Heart left ventricle (tissue), 16 donors: ENCODE measurements at regions of chr17 and their contacts with region 1.

Region 1: DNA sequence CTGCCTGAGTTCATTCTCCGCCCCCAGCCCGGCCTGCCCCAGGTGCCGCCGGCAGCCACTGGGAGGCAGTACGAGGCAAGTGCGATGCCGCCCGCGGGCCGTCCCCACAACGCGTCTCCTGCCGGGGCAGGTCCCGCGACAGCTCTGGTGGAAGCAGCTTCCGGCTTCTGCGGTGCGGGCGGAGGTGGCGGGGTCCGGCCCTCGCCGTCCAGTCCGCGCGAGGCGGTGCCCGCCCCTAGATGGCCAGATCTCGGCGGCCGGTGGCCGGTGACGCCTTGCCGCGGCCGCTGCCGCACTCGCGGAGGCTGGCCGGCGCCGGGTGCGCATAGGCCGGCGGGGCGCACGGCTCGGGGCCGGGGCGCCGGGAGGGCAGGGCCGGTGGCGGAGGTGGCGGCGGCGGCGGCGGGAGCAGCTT is 1.8 kb downstream of the GJD3 start:
- DNase-seq: peak; percentile 56 to 85 (median 73)
- ATAC-seq: peak in 3 of 4 donors; percentile 27 to 64 (median 43)
- H3K4me3 ChIP-seq: peak overlapping the region in 11 of 12 donors; percentile 43 to 69 (median 58)
- H3K27ac ChIP-seq: peak overlapping the region in 6 of 12 donors; percentile 17 to 60 (median 42)
- H3K4me1 ChIP-seq: peaks cover 0 to 33% (median 12%) of the 10 kb centered on the region in 12 donors
- H3K27me3 ChIP-seq: peaks cover 0 to 16% (median 0%) of the 10 kb centered on the region in 9 donors
- CTCF ChIP-seq: peak; percentile 25 to 70 (median 49)
- POLR2A ChIP-seq: no peak

Region 2: DNA sequence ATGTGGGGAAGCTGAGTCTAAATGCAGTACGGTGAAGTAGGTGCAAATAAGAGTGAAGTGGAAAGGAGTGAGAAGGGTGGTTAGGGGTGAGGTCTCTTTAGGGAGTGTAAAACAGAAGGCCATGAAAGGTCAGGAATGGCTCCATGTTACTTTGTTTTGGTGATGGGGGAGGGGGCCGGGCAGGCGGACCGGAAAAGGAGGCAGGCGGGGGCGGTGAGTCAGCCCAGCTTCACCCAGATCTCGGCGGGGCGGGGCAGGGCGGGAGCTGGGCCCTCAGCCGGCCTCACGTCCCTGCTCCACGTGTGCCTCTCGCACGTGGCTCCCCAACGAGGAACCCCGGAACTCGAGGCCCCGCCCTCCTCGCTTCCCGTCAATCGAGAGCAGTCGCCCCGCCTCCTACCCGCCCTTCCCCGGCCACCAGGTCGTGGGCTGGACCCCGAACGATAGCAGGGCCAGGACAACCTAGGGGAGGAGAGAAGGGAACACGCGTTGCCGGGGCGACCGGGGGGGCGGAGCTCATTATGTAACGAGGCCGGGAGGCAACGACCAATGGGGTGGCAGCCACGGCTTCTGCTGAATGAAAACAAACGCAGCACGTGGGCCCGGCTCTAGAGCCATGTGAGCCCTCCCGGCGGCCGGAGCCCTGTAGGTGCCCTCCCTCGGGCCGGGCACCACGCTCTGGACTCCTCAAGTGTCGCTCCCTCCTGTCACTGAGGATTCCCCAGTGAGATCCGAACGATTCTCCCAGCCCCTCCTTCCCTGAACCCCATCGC is 263.7 kb before region 1 on chr17:
- intact Hi-C with region 1: no loop called
- DNase-seq: peak; percentile 100
- ATAC-seq: peak; percentile 75 to 87 (median 82)
- H3K4me3 ChIP-seq: peak overlapping the region; percentile 72 to 100 (median 84)
- H3K27ac ChIP-seq: peak overlapping the region; percentile 93 to 100 (median 98)
- H3K4me1 ChIP-seq: peaks cover 20 to 93% (median 79%) of the 10 kb centered on the region in 12 donors
- H3K27me3 ChIP-seq: no peaks in the 10 kb centered on the region
- CTCF ChIP-seq: no peak
- POLR2A ChIP-seq: peak; percentile 64 to 89

Region 3: DNA sequence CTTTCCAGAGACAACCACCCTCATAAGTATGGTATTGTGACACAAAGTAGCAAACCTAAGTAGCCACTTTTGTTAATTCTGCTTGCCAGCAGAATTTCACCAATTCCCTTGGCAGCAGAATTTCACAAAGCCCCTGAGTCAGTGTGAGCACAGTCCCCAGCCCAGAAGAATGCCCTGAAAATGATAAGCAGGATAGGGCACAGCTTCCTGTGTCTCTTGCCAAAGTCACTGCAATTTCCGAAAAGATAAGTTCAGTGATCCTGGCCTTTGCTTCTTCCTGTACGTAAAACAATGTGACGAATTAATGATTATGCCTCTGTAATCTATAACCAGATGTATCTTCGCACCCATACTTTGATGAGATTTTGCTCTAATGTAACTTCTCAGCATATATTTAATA is 159.6 kb before region 1 on chr17:
- intact Hi-C with region 1: loop called in 3 of 10 experiments (anchors 5 to 10 kb)
- DNase-seq: no peak
- ATAC-seq: peak in 2 of 4 donors; percentile 65
- H3K4me3 ChIP-seq: no peak overlapping the region
- H3K27ac ChIP-seq: no peak overlapping the region
- H3K4me1 ChIP-seq: peaks cover 0 to 16% (median 0%) of the 10 kb centered on the region in 12 donors
- H3K27me3 ChIP-seq: no peaks in the 10 kb centered on the region
- CTCF ChIP-seq: no peak
- POLR2A ChIP-seq: no peak

Region 4: GRCh38 chr17:40303009-40303657 is 59.6 kb before region 1 on chr17:
- intact Hi-C with region 1: no loop called
- DNase-seq: peak in 1 of 5 donors; percentile 60
- ATAC-seq: peak; percentile 33 to 71 (median 68)
- H3K4me3 ChIP-seq: no peak overlapping the region
- H3K27ac ChIP-seq: peak overlapping the region in 6 of 12 donors; percentile 4 to 64 (median 48)
- H3K4me1 ChIP-seq: peaks cover 3 to 65% (median 48%) of the 10 kb centered on the region in 12 donors
- H3K27me3 ChIP-seq: no peaks in the 10 kb centered on the region
- CTCF ChIP-seq: peak; percentile 59 to 86 (median 79)
- POLR2A ChIP-seq: no peak

Region 5: GRCh38 chr17:40399185-40399584 is 36.5 kb after region 1 on chr17:
- intact Hi-C with region 1: loop called in 3 of 10 experiments (anchors 5 kb)
- DNase-seq: no peak
- ATAC-seq: peak in 2 of 4 donors; percentile 44 to 70
- H3K4me3 ChIP-seq: no peak overlapping the region
- H3K27ac ChIP-seq: no peak overlapping the region
- H3K4me1 ChIP-seq: no peaks in the 10 kb centered on the region
- H3K27me3 ChIP-seq: no peaks in the 10 kb centered on the region
- CTCF ChIP-seq: peak; percentile 49 to 74 (median 58)
- POLR2A ChIP-seq: no peak

Region 6: GRCh38 chr17:40480501-40481003 is 117.8 kb after region 1 on chr17:
- intact Hi-C with region 1: loop called in 1 of 10 experiments (anchors 5 kb)
- DNase-seq: peak in 1 of 5 donors; percentile 51
- ATAC-seq: peak in 3 of 4 donors; percentile 20 to 60 (median 30)
- H3K4me3 ChIP-seq: no peak overlapping the region
- H3K27ac ChIP-seq: peak overlapping the region in 1 of 12 donors; percentile 86
- H3K4me1 ChIP-seq: peaks cover 0 to 31% (median 5%) of the 10 kb centered on the region in 12 donors
- H3K27me3 ChIP-seq: no peaks in the 10 kb centered on the region
- CTCF ChIP-seq: no peak
- POLR2A ChIP-seq: no peak

Region 7: DNA sequence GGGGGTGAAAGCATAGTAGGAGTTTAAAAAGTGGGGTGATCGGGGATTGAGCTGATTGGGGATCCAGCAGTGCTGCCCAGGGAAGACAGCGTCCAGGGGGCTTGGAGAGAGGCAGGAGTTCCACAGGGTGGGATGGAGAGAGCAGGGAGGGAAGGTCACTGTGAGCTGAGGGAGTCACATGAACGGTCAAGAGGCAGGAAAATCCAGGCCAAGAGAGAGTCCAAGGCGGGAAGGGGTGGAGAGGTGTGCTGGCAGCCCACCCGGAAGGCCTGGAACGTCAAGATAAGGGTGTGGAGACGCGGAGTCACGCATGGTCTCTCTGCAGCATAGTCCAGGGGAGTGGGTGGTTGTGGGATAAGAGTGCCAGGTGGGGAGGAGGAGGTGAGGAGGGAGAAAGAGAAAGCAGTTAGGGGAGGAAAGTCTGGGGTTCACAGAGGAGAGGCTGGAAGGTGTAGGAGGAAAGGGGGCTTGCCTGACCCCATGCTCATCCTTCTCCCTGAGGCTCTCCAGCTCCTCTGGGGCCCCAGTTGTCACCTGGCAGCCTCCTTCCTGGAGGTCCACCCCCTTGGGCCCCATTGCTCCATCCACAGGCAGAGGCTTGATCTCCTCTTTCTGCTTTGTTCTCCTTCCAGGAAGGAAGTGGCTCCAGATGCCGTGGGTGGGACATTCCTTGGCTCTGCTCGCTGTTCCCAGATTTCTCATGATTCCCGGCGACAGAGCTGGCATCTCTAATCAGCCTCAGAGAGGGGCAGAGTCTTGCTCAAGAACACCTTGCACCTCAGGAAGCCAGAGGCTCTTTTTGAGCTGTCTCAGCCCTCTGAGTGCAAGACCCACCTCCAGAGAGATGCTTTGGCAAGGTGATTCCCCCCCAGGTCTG is 173.8 kb after region 1 on chr17:
- intact Hi-C with region 1: loop called in 9 of 10 experiments (anchors 1 to 10 kb)
- DNase-seq: peak in 4 of 5 donors; percentile 71 to 80 (median 76)
- ATAC-seq: peak; percentile 45 to 75 (median 64)
- H3K4me3 ChIP-seq: no peak overlapping the region
- H3K27ac ChIP-seq: peak overlapping the region; percentile 59 to 98 (median 88)
- H3K4me1 ChIP-seq: peaks cover 27 to 97% (median 71%) of the 10 kb centered on the region in 12 donors
- H3K27me3 ChIP-seq: no peaks in the 10 kb centered on the region
- CTCF ChIP-seq: no peak
- POLR2A ChIP-seq: no peak